Activated T-helper 1 cell treated with anti-CD3 and anti-CD28 coated beads, Interleukin-12 subunit alpha, Interleukin-12 subunit beta, Interleukin-2, Interleukin-4 antibody, amounts not matched to agents 30 ng/mL and 10 ng/mL and 1 ng/mL, durations not matched to agents 14 hours and 24 hours and 36 hours (primary cell): ENCODE measurements at regions of chr18 and their contacts with region 1.

Region 1: DNA sequence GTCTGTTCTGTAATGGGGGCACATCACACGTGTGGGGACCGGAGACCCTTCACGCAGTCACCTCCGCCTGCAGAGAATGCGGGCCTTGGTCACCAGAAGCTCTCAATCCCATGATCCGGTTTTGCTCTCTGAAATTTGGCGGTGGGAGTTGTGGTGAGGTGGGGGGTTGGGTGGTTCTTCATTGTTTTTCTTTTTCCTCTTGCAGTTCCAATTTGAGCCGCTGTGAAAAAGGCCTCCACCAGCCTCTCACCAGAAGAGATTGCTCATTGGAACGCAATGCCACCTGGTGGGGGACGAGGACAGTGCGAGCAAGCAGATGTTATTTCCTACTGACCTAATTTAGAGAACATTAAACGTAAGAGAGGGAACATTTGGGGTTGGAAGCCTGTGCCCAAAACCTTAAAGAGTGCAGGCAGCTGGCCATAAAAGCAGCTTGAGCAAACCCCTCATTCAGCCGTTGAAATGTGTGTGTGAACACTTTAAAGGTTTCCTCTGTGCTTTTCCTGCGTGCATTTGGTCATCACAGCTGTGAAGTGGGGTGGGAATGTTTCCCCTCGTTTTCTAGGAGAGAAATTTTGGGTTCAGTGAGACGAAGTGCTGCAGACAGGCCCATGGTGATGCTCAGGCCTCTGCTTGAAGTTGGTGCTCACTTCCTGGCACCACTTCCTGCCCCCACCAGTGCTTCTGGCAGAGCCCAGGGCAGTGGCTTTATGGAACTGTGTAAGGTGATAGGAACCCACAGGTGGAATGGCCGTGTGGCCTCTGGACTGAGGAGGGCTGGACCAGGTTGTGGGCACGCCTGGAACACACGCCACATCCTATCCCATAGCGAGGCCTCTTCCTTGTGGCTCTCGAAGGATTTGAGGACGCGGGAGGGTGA is 61.7 kb downstream of the ZCCHC2 start:
- DNase-seq: peak; percentile 75
- H3K4me3 Mint-ChIP-seq: peak overlapping the region; percentile 0
- H3K27ac Mint-ChIP-seq: peak overlapping the region; percentile 61
- H3K4me1 Mint-ChIP-seq: peaks cover 44% of the 10 kb centered on the region
- H3K27me3 Mint-ChIP-seq: no peaks in the 10 kb centered on the region

Region 2: GRCh38 chr18:62368100-62368499 is 216.4 kb before region 1 on chr18:
- intact Hi-C with region 1: loop called (anchors 1 kb)
- DNase-seq: no peak
- H3K4me3 Mint-ChIP-seq: peak overlapping the region; percentile 23
- H3K27ac Mint-ChIP-seq: peak overlapping the region; percentile 85
- H3K4me1 Mint-ChIP-seq: peaks cover 73% of the 10 kb centered on the region
- H3K27me3 Mint-ChIP-seq: no peaks in the 10 kb centered on the region

Region 3: DNA sequence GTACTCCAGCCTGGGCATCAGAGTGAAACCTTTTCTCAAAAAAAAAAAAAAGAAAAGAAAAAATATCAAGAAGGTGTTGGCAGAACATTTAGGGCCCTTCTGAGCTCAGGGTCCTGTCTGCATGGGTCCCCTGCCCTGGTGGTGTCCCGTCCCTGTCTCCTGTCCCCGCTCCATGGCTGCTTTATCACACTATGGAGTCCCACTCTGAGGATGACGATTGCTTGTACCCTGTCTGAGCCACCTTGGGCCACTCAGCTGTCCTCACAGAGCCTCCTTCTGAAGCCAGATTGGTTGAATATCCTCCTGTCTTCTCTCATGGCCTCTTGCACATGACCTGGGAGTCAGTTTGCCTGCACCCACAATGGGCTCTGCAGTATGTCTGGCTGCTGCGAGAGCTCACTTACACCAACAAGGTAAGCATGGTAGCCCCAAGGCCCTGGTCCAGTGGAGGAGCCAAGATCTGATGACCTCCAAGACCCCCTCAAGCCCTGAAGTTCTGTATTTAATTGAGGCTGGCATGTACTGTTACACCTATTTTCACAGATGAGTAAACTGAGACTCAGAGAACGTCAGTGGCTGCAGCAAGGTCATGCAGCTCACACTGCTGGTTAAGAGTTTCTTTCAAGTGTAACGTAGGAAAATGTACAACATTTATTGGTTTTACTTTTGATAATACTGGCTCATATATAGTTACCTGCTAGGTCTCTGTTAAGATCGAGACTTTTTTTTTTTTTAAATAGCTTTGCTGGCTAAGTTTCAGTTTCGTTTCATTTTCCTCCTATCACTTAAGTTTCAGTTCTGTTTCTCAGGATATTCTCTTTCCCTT is 78.6 kb before region 1 on chr18:
- intact Hi-C with region 1: loop called (anchors 1 kb)
- DNase-seq: peak; percentile 25
- H3K4me3 Mint-ChIP-seq: peak overlapping the region; percentile 81
- H3K27ac Mint-ChIP-seq: peak overlapping the region; percentile 96
- H3K4me1 Mint-ChIP-seq: peaks cover 23% of the 10 kb centered on the region
- H3K27me3 Mint-ChIP-seq: peaks cover 2% of the 10 kb centered on the region

Region 4: GRCh38 chr18:62571648-62572047 is 12.8 kb before region 1 on chr18:
- intact Hi-C with region 1: no loop called
- DNase-seq: no peak
- H3K4me3 Mint-ChIP-seq: no peak overlapping the region
- H3K27ac Mint-ChIP-seq: peak overlapping the region; percentile 61
- H3K4me1 Mint-ChIP-seq: peaks cover 52% of the 10 kb centered on the region
- H3K27me3 Mint-ChIP-seq: no peaks in the 10 kb centered on the region

Region 5: GRCh38 chr18:62957885-62958472 is 373.5 kb after region 1 on chr18:
- intact Hi-C with region 1: loop called (anchors 1 kb)
- DNase-seq: peak; percentile 43
- H3K4me3 Mint-ChIP-seq: no peak overlapping the region
- H3K27ac Mint-ChIP-seq: no peak overlapping the region
- H3K4me1 Mint-ChIP-seq: peaks cover 16% of the 10 kb centered on the region
- H3K27me3 Mint-ChIP-seq: no peaks in the 10 kb centered on the region

Region 6: DNA sequence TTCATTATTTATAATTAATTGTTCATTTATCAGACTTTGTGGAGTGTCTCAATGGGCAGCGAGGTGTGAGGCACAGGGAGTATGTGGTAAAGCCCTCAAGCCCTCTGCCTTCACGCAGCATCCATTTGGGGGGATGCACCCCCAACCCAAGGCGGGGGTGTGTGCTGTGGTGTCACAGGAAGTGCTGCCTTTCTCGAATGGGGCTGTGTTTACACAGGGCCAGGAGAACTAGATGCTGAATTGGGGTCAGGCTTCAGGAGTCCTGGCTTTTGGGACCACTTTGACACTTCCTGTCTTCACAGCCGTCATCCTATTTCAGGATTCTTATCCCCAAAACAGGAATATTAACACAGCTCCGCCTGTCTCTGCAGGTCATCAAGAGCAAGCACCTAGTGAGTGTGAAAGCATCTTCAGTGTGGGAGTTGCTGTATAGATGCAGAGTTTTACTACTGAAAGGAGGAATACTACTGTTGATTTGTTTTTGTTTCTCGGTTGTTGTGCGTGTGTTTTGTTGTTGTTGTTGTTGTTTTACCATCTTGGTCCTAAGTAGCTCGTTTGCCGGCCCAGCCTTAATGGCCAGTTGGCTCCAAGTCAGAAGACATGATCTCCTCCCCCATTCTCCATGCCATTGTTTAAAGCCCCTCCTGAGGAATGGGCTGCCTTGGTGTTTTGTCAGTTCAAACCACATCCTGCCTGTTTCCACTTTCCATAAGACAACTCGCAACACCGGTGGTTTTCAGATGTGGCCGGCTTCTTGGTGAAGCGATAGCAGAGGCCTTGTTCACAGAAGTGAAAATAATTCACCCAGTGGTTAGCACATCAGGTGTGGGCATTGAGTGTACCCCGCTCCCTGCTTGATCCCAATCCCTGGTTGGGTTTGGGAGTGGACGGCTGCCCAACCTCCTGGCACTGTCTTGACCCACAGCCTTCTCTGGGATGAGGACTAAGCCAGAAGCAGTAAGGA is 513.8 kb after region 1 on chr18:
- intact Hi-C with region 1: loop called (anchors 10 kb)
- DNase-seq: peak; percentile 63
- H3K4me3 Mint-ChIP-seq: peak overlapping the region; percentile 24
- H3K27ac Mint-ChIP-seq: peak overlapping the region; percentile 78
- H3K4me1 Mint-ChIP-seq: peaks cover 52% of the 10 kb centered on the region
- H3K27me3 Mint-ChIP-seq: peaks cover 53% of the 10 kb centered on the region